Activated T-helper 2 cell treated with anti-CD3 and anti-CD28 coated beads, Interferon-gamma antibody, Interleukin-2, Interleukin-4, amounts not matched to agents 10 μg/mL and 5 μg/mL and 100 μg/mL, durations not matched to agents 14 hours and 24 hours and 36 hours (primary cell): ENCODE measurements at regions of chr1 and their contacts with region 1.

Region 1: GRCh38 chr1:234499119-234499942 is 20.4 kb upstream of the TARBP1 start:
- DNase-seq: peak; percentile 81
- H3K4me3 Mint-ChIP-seq: peak overlapping the region; percentile 11
- H3K27ac Mint-ChIP-seq: peak overlapping the region; percentile 93
- H3K4me1 Mint-ChIP-seq: peaks cover 80% of the 10 kb centered on the region
- H3K27me3 Mint-ChIP-seq: no peaks in the 10 kb centered on the region

Region 2: GRCh38 chr1:234521807-234522195 is 22.5 kb after region 1 on chr1:
- intact Hi-C with region 1: loop called (anchors 1 kb)
- DNase-seq: no peak
- H3K4me3 Mint-ChIP-seq: no peak overlapping the region
- H3K27ac Mint-ChIP-seq: no peak overlapping the region
- H3K4me1 Mint-ChIP-seq: peaks cover 44% of the 10 kb centered on the region
- H3K27me3 Mint-ChIP-seq: no peaks in the 10 kb centered on the region

Region 3: DNA sequence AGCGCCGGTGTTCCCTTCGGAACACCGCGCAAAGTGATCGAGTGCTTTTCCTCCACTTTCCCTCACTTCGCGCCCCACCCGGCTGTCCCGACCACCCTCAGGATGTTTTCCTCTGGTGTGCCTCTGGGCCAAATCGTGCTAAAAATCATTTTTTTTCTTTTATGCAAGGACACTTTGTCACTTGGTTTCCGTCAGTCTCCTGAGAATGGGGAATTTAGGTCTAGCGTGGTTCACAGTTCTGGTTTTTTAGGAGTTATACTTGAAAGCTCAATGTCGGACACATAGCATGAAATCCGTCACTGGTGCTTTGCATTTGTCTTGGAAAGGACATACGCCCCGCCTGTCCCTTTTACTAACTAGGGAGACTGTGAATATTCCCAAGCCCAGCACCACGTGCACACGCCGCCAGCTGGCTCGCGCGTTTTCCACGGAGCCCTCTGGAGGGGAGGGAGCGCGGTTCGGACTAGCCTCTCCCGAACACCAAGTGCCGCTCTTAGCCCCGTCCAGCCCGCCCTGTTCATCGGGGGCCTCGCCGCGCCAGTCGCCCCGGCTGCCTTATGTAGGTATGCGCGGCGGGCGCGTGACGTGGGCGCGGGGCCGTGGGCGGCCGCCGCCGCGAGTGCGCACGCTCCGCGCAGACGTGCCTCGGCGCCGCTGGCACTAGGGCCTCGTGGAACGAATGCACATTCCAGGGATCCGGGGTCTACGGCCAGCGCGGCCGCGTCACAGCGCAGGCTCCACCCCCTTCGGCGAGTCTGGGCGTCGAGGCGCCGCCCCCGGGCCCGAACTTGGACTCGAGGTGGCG is 111.2 kb after region 1 on chr1:
- intact Hi-C with region 1: loop called (anchors 1 kb)
- DNase-seq: peak; percentile 86
- H3K4me3 Mint-ChIP-seq: peak overlapping the region; percentile 88
- H3K27ac Mint-ChIP-seq: peak overlapping the region; percentile 98
- H3K4me1 Mint-ChIP-seq: peaks cover 39% of the 10 kb centered on the region
- H3K27me3 Mint-ChIP-seq: peaks cover 2% of the 10 kb centered on the region

Region 4: GRCh38 chr1:234730770-234731568 is 231.6 kb after region 1 on chr1:
- intact Hi-C with region 1: loop called (anchors 2 kb)
- DNase-seq: peak; percentile 36
- H3K4me3 Mint-ChIP-seq: no peak overlapping the region
- H3K27ac Mint-ChIP-seq: peak overlapping the region; percentile 97
- H3K4me1 Mint-ChIP-seq: peaks cover 74% of the 10 kb centered on the region
- H3K27me3 Mint-ChIP-seq: no peaks in the 10 kb centered on the region

Region 5: DNA sequence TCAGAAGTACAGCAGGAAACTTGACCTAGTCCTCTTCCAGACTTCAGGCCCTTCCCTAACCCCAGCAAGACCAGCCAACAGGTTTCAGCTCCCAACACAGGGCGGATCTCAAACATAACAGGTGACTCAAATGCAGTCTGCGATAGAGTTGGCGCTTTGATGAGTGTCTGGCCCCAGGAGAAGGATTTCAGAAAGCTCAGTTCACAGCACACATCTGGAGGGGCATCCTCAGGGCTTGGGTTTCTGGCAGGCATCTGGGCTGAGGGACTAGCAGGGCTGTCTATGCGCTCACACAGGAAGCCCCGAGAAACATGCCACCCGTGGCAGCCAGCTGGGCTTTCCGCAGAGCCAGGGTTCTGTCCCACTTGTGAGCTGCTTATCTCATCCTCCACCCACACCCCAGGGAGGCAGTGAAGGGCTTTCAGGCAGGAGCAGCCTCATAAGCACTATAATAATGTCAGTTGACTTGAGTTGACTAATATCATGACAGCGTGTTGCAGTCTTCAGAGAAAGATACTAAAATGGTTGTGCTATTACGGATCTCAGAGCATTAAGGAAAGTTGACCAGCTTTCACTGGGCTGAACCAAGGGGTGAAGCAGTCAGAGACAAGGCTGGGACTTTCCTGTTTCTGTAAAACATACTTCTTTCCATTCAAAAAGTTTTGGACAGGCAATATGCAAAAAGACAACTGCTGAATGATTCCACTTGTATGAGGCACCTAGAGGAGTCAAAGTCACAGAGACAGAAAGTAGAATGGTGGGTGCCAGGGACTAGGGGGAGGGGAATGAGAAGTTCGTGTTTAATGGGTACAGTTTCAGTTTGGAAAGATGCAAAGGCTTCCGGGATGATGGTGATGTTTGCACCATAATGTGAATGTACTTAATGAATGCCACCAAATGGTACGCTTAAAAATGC is 343.7 kb after region 1 on chr1:
- intact Hi-C with region 1: loop called (anchors 1 kb)
- DNase-seq: peak; percentile 57
- H3K4me3 Mint-ChIP-seq: peak overlapping the region; percentile 77
- H3K27ac Mint-ChIP-seq: peak overlapping the region; percentile 90
- H3K4me1 Mint-ChIP-seq: peaks cover 93% of the 10 kb centered on the region
- H3K27me3 Mint-ChIP-seq: no peaks in the 10 kb centered on the region

Region 6: DNA sequence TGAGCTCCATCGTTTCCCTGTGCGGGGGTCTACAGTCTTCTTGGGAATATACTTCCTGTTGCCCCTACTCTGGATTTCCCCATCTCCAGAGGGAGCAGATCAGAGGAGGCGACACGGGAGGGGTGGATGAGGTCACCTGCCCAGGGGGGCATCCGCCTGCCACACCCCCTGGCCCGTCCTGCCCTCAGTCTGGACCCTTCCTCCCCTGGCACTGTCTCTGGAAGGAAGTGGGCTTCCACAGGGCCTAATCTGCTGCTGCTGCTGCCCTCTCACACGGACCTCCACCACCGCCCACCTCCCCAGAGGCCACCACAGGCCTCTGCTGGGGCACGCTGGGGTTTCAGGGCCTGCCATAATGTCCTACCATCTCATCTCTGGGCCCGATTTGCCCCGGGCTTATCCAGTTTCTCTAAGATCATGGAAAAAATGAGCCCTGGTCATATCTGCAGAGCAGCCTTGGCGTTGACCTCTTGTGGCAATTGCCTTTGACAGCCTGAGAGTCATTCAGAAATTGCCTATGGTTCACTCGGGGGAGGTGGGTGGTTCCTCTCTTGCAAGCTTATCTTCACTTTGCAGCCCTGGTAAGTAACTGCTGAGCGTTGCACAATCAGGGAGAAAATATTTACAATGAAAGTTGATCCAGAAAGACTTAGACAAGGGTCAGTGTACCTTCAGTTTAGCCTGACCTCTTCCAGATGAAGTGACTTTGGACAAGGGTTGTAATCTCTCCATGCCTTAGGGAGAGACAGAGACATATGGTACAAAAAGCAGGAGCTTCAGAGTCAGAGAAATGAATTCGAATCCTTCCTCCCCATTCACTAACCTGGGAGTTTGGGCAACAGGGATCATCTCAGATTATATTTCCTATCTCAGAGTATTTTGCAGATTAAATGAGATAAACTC is 376.9 kb after region 1 on chr1:
- intact Hi-C with region 1: loop called (anchors 1 kb)
- DNase-seq: no peak
- H3K4me3 Mint-ChIP-seq: no peak overlapping the region
- H3K27ac Mint-ChIP-seq: peak overlapping the region; percentile 88
- H3K4me1 Mint-ChIP-seq: peaks cover 63% of the 10 kb centered on the region
- H3K27me3 Mint-ChIP-seq: no peaks in the 10 kb centered on the region